Activated naive CD4-positive, alpha-beta T cell treated with anti-CD3 and anti-CD28 coated beads, Interleukin-2, amount 10 ng/mL, durations not matched to agents 7 days and 5 days (primary cell): ENCODE measurements at regions of chr17 and their contacts with region 1.

Region 1: GRCh38 chr17:10646392-10646990 is 10.6 kb downstream of the MYH3 start:
- DNase-seq: peak; percentile 82
- H3K4me3 Mint-ChIP-seq: no peak overlapping the region
- H3K27ac Mint-ChIP-seq: no peak overlapping the region
- H3K4me1 Mint-ChIP-seq: no peaks in the 10 kb centered on the region
- H3K27me3 Mint-ChIP-seq: no peaks in the 10 kb centered on the region

Region 2: DNA sequence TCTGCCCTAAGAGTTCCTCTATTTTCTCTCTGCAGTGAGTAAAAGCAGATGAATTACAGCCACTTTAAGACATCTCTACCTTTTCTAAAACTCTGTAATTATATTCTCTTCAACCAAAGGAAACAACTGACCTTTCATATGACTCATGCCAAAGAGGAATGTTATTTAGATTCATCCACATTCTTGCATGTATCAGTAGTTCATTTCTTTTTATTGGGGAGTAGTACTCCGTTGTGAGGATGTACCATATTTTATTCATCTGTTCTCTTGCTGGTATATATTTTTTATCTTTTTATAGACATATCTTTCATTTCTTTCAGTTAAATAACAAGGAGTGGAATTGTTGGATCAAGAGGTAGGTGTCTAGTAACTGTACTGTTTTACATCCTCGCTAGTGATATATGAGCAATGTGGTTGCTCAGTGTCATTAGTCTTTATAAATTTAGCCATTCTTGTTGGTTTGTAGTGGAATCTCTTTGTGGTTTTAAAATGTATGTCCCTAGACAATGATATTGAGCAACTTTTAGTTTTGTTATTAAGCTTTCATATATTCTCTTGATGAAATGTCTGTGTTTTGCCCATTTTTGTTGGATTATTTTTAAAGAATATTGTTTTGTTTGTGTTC is 217.0 kb before region 1 on chr17:
- CTCF ChIA-PET with region 1: no interaction called
- DNase-seq: no peak
- H3K4me3 Mint-ChIP-seq: no peak overlapping the region
- H3K27ac Mint-ChIP-seq: no peak overlapping the region
- H3K4me1 Mint-ChIP-seq: no peaks in the 10 kb centered on the region
- H3K27me3 Mint-ChIP-seq: no peaks in the 10 kb centered on the region

Region 3: GRCh38 chr17:10631048-10631700 is 15.3 kb before region 1 on chr17:
- CTCF ChIA-PET with region 1: interaction called, 19 read pairs
- DNase-seq: peak; percentile 33
- H3K4me3 Mint-ChIP-seq: no peak overlapping the region
- H3K27ac Mint-ChIP-seq: no peak overlapping the region
- H3K4me1 Mint-ChIP-seq: peaks cover 3% of the 10 kb centered on the region
- H3K27me3 Mint-ChIP-seq: no peaks in the 10 kb centered on the region

Region 4: GRCh38 chr17:10683853-10684252 is 37.4 kb after region 1 on chr17:
- CTCF ChIA-PET with region 1: interaction called, 21 read pairs
- DNase-seq: no peak
- H3K4me3 Mint-ChIP-seq: no peak overlapping the region
- H3K27ac Mint-ChIP-seq: no peak overlapping the region
- H3K4me1 Mint-ChIP-seq: no peaks in the 10 kb centered on the region
- H3K27me3 Mint-ChIP-seq: no peaks in the 10 kb centered on the region

Region 5: GRCh38 chr17:10737168-10737622 is 90.7 kb after region 1 on chr17:
- CTCF ChIA-PET with region 1: interaction called, 13 read pairs
- DNase-seq: peak; percentile 51
- H3K4me3 Mint-ChIP-seq: no peak overlapping the region
- H3K27ac Mint-ChIP-seq: no peak overlapping the region
- H3K4me1 Mint-ChIP-seq: peaks cover 4% of the 10 kb centered on the region
- H3K27me3 Mint-ChIP-seq: peaks cover 26% of the 10 kb centered on the region

Region 6: DNA sequence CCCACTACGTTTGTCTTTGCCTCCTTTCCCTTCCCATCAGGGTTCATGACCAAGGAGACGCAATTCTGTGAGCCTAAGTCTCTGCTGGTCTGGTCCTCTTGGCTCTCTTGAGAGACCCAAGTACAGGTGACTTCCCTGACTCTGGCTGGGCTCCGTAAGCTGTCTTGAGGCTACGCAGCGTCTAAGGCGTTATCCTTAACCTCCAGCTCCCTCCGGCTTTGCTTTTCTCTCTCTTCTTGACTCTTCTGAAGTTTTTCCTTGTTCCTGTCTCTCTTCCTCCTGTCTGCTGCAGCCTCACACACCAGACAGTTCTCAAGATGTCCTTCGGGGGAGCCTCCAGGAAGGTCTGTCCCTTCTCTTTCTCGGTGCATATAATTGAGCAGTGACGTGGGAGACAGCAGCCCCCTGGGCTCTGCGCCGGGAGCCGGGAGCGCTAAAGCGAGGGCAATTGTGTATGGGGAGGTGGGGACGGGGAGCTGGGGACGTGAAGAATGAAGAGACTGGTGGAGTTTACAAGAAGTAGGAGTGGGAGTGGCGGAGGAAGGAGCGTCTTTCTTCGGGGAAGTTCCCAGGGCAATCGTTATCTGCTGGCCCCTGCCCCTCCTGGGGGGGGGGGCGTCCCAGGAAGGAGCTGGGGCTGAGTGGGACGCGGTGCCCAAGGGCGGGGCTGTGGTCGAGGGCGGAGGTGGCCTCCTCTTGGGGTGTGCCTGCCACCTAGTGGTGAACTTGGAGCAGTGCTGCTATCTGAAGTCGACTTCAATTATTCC is 198.3 kb after region 1 on chr17:
- CTCF ChIA-PET with region 1: interaction called, 30 read pairs
- DNase-seq: peak; percentile 82
- H3K4me3 Mint-ChIP-seq: peak overlapping the region; percentile 68
- H3K27ac Mint-ChIP-seq: no peak overlapping the region
- H3K4me1 Mint-ChIP-seq: peaks cover 8% of the 10 kb centered on the region
- H3K27me3 Mint-ChIP-seq: peaks cover 26% of the 10 kb centered on the region

Region 7: DNA sequence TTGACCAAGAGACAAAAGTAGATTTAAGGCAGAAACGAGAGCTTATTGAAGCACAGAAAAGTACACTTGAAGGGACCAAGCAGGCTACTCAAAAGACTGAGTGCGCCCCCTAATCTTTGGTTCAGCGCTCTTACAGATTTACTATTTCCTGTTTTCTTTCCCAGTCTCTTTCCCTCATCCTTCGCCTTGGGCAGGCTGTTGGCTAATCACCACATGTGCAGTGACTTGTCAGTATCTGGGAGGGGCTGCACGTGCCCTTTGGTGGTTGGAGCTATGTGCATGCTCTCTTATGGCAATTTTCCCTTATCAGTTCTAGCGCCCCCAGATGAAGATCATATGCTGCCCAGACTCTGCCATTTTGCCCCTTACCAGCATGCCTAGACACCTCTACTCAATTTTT is 559.2 kb after region 1 on chr17:
- CTCF ChIA-PET with region 1: no interaction called
- DNase-seq: no peak
- H3K4me3 Mint-ChIP-seq: no peak overlapping the region
- H3K27ac Mint-ChIP-seq: no peak overlapping the region
- H3K4me1 Mint-ChIP-seq: no peaks in the 10 kb centered on the region
- H3K27me3 Mint-ChIP-seq: no peaks in the 10 kb centered on the region